ENCODE measurements at regions of chr6 and their contacts with region 1.

Region 1: GRCh38 chr6:168370310-168370991 is 50.9 kb upstream of the DACT2 start:
- DNase-seq: peak; percentile 78
- H3K4me3 ChIP-seq: no peak overlapping the region
- H3K27ac ChIP-seq: no peak overlapping the region
- H3K4me1 ChIP-seq: no peaks in the 10 kb centered on the region
- H3K27me3 ChIP-seq: no peaks in the 10 kb centered on the region
- CTCF ChIP-seq: peak; percentile 91 to 97 (median 96)
- POLR2A ChIP-seq: no peak

Region 2: DNA sequence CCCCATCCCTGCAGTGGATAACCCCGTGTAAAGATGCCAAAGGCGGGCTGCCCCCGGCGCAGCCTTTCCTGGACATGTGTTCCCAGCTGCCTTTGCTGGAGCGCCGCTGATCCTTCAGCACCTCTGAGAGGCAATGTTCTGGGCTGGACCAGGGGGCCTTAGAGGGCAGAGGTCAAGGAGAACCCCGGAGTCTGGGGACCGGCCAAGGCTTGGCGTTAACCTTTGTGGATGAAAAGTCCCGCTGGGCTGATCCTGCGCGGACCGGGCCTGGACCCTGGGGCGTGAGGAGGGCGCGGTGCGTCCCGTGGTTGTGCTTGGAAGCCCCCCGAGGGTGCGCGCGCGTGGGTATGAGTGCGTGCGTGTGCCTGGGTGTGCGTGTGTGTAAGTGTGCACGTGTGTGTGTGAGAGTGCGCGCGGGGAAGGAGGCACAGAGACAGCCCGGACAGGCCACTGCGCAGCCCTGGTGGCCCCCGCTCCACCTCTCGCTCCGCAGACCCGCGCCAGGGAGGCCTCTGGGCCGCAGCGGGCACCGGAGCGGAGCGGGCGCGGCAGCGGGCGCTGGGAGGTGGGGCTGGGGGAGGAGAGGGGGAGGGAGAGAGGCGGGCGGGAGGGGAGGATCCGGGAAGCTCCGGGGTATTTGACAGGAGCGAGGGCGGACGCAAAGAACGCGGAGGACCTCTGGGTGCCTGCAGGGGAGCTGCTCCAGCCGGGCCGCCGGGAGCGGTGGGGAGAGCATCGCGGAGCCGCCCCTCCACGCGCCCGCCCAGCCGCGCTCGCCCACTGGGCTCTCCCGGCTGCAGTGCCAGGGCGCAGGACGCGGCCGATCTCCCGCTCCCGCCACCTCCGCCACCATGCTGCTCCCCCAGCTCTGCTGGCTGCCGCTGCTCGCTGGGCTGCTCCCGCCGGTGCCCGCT is 70.3 kb after region 1 on chr6 and contains the start of gene SMOC2:
- intact Hi-C with region 1: loop called (anchors 5 kb)
- DNase-seq: peak; percentile 40
- H3K4me3 ChIP-seq: peak within 1 kb of the TSS; percentile 42 to 47
- H3K27ac ChIP-seq: peak within 1 kb of the TSS in 1 of 2 donors; percentile 37
- H3K4me1 ChIP-seq: no peaks in the 10 kb centered on the region
- H3K27me3 ChIP-seq: no peaks in the 10 kb centered on the region
- CTCF ChIP-seq: peak in 1 of 4 experiments; percentile 10
- POLR2A ChIP-seq: no peak
- total RNA-seq, gene SMOC2: 17.8 to 167 TPM

Region 3: GRCh38 chr6:168533414-168533813 is 163.0 kb after region 1 on chr6:
- intact Hi-C with region 1: loop called (anchors 10 kb)
- DNase-seq: no peak
- H3K4me3 ChIP-seq: no peak overlapping the region
- H3K27ac ChIP-seq: peak overlapping the region in 1 of 2 donors; percentile 14
- H3K4me1 ChIP-seq: no peaks in the 10 kb centered on the region
- H3K27me3 ChIP-seq: no peaks in the 10 kb centered on the region
- CTCF ChIP-seq: no peak
- POLR2A ChIP-seq: no peak

Region 4: DNA sequence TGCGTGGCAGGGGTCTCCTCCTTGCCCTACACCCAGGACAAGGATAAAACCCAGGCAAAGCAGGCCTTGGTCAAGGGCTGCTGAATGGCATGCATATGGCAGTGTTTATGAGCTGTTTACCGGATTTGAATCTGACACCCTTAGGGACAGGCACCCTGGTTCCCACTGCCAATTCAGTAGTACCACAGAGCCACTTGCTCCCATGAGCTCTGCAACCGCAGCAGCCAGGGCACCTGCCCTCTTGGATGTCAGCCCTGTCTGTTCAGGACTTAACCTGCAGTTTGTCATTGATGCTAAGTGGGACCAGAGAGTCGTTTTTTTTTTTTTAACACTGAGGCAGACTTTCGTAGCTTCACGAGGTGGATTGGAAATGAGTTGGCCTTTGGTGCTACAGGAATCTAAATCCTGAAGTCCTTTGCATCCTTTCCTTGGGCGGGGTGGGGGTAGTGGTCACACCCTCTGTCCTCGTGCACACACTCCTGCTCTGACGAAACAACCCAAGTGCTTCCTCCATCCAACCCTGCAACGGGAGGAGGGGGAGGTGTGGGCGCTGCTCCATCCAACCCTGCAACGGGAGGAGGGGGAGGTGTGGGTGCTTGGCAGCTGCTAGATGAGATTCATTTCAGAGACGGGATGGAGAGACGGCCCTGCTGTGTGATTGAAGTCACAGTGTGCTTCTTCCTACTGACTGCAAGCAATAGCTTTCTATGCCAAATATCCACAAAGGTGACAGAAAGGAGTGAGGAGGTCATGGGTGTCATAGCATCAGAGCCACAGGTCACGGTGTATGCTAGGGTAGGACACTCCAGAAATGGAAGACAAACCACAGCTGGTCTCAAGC is 237.0 kb after region 1 on chr6:
- intact Hi-C with region 1: loop called (anchors 10 kb)
- DNase-seq: no peak
- H3K4me3 ChIP-seq: no peak overlapping the region
- H3K27ac ChIP-seq: no peak overlapping the region
- H3K4me1 ChIP-seq: no peaks in the 10 kb centered on the region
- H3K27me3 ChIP-seq: no peaks in the 10 kb centered on the region
- CTCF ChIP-seq: no peak
- POLR2A ChIP-seq: no peak

Region 5: DNA sequence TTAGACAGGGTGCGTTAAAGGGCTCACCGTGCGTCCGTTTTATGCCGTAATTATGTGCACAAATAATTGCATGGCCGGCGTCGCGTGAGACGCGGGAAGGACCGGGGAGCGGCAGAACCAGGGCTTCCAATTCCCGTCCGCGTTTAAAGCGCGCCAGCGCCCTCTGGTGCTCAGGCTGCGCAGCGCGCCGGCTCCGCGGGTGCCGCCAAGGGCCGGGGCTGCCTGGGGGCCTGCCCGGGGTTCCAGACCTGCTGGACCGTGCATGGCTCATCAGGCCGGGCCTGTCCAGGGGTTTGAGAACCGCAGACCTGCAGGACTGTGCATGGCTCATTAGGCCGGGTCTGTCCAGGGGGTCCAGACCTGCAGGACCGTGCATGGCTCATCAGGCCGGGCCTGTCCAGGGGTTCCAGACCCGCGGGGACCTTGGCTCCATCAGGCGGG is 514.2 kb after region 1 on chr6:
- intact Hi-C with region 1: loop called (anchors 1 kb)
- DNase-seq: peak; percentile 60
- H3K4me3 ChIP-seq: no peak overlapping the region
- H3K27ac ChIP-seq: no peak overlapping the region
- H3K4me1 ChIP-seq: no peaks in the 10 kb centered on the region
- H3K27me3 ChIP-seq: no peaks in the 10 kb centered on the region
- CTCF ChIP-seq: peak; percentile 90 to 96 (median 94)
- POLR2A ChIP-seq: no peak